CD14-positive monocyte (primary cell): ENCODE measurements at regions of chr10 and their contacts with region 1.

Region 1: GRCh38 chr10:103918053-103918846 is at the start of gene STN1:
- DNase-seq: peak; percentile 94 to 95 (median 94)
- H3K4me3 ChIP-seq: peak within 1 kb of the TSS; percentile 56 to 88 (median 73)
- H3K4me3 Mint-ChIP-seq: peak within 1 kb of the TSS; percentile 92 to 98
- H3K27ac ChIP-seq: peak within 1 kb of the TSS; percentile 79 to 93
- H3K27ac Mint-ChIP-seq: peak within 1 kb of the TSS; percentile 93 to 97 (median 95)
- H3K4me1 ChIP-seq: peaks cover 34 to 47% of the 10 kb centered on the region in 2 donors
- H3K4me1 Mint-ChIP-seq: peaks cover 41% of the 10 kb centered on the region
- H3K27me3 ChIP-seq: no peaks in the 10 kb centered on the region
- H3K27me3 Mint-ChIP-seq: no peaks in the 10 kb centered on the region
- CTCF ChIP-seq: no peak
- polyA plus RNA-seq, gene STN1: 19.3 to 37.4 (median 35.9) TPM

Region 2: DNA sequence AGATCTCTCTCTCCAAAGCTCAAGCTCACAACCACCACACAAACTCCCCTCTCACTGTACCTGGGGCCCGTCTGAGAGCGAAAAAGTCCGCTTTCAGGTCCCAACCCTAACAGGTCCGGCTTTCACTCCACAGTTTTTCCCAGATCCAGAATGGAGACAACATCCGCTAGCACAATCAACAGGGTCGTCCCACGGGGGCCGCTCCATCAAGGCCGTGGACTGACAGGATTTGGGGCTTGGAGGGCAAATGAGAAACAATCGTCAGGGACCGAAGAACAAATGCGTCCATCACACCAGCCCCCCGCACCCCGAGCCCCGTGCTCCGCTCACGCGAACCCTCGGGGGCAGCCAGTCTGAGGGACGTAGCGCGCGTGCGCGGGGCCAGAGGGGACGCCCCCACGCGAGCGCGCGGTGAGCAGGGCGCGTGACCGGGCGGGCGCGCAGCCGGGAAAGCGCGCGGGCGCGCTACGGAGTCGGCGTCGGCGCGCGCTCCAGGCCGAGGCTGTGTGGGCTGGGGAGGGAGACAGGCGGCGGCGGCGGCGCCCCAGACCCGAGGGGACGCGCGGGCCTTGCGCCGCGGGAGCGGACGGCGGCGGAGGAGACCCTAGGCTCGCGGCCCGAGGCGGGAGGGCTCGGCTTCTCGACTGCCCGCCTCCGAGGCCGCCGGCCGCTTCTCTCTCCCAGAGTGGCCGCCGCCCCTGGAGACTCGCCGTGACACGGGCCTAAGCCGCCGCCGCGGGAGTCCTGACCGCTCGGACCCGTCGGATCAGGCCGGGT is 48.6 kb after region 1 on chr10 and contains the start of gene SLK:
- intact Hi-C with region 1: loop called (anchors 5 kb)
- DNase-seq: peak; percentile 77 to 86 (median 80)
- H3K4me3 ChIP-seq: peak within 1 kb of the TSS; percentile 90 to 99 (median 93)
- H3K4me3 Mint-ChIP-seq: peak within 1 kb of the TSS; percentile 98 to 100
- H3K27ac ChIP-seq: peak within 1 kb of the TSS; percentile 42 to 93
- H3K27ac Mint-ChIP-seq: peak within 1 kb of the TSS; percentile 87 to 95 (median 93)
- H3K4me1 ChIP-seq: peaks cover 23 to 43% of the 10 kb centered on the region in 2 donors
- H3K4me1 Mint-ChIP-seq: peaks cover 42% of the 10 kb centered on the region
- H3K27me3 ChIP-seq: no peaks in the 10 kb centered on the region
- H3K27me3 Mint-ChIP-seq: peaks cover 0 to 1% (median 0%) of the 10 kb centered on the region in 3 donors
- CTCF ChIP-seq: no peak
- polyA plus RNA-seq, gene SLK: 2.9 to 6.5 (median 4.4) TPM

Region 3: DNA sequence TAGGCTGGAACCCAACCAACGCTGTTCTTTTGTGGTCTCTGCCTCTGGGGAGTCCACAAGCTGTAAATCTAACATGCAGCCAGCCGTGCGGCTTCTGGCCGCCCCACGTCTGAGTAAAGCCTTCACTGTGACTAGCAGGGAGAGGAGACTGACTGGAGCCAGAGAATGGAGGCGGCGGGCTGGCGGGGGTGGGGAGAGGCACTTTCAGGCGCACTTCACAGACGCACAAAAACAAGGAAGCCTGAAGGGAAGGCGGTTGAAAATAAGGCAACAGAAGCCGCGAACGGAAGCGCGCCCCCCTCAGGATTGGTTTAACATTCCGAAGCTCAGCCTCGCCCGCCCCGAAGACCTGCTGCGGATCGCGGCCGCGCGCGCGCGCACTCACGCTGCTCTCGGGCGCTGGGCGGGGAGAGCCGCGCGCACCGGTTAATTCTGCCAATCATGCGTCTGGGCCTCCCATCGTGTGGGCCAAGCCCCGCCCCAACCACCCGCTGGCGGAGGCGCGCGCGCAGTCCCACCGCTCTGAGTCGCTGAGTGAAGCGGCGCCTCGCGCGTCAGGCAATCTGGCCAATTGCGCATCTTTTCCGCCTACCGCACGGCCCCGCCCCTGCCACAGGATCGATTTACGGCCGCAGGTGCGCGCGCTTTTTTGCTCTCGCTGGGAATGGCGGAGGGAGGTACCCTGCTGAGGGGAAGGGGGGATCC is 203.4 kb after region 1 on chr10 and contains the start of gene SFR1:
- intact Hi-C with region 1: loop called (anchors 5 to 10 kb)
- DNase-seq: peak; percentile 98 to 99 (median 99)
- H3K4me3 ChIP-seq: peak within 1 kb of the TSS; percentile 94 to 97 (median 95)
- H3K4me3 Mint-ChIP-seq: peak within 1 kb of the TSS; percentile 86 to 91
- H3K27ac ChIP-seq: peak within 1 kb of the TSS; percentile 96 to 100
- H3K27ac Mint-ChIP-seq: peak within 1 kb of the TSS; percentile 98 to 100 (median 99)
- H3K4me1 ChIP-seq: peaks cover 12 to 18% of the 10 kb centered on the region in 2 donors
- H3K4me1 Mint-ChIP-seq: peaks cover 14% of the 10 kb centered on the region
- H3K27me3 ChIP-seq: no peaks in the 10 kb centered on the region
- H3K27me3 Mint-ChIP-seq: peaks cover 0 to 5% (median 1%) of the 10 kb centered on the region in 3 donors
- CTCF ChIP-seq: peak; percentile 62
- polyA plus RNA-seq, gene SFR1: 6.4 to 18.1 (median 16.9) TPM

Region 4: DNA sequence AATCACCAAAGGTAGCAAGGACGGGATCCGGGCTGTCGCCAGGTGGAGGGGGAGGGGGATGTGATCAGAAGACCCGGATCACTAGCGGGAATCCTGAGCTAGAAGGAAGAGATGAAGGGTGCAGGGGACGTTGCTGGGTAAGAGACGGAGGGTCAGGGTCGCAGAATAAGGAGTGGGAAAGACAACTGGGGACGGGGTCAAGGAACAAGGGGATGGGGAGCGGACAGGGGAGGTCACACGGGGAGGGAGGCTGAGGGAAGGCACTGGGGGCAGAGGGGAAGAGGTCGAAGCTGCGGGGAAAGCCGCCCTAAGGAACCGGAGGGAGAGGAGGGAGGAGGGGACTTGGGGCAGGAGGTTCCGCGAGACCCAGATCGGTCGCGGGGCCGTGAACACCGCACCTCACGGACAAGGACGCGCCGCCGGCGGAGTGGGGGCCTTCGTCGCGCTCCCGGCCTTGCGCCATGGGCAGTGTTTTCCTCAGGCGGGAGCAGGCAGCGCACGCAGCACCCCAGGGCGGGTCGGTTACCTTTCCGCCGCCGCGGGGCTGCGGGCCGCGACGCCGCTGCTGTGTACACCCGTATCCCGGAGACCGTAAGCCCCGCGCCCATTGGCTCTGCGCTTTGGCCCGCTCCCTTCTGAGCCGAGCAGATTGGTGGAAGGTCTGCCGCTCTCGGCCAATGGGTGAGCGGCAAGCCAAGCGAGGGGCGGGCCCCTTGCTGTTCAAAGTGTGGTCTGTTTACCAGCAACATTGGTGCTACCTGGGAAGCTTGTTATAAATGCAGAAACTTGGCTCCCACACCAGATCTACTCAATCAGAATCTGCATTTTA is 313.7 kb after region 1 on chr10 and contains the start of gene CFAP43:
- intact Hi-C with region 1: loop called in 1 of 2 experiments (anchors 10 kb)
- DNase-seq: peak; percentile 96 to 97 (median 96)
- H3K4me3 ChIP-seq: peak within 1 kb of the TSS; percentile 51 to 77 (median 57)
- H3K4me3 Mint-ChIP-seq: peak within 1 kb of the TSS; percentile 80 to 89
- H3K27ac ChIP-seq: peak within 1 kb of the TSS in 1 of 2 donors; percentile 33
- H3K27ac Mint-ChIP-seq: peak within 1 kb of the TSS in 5 of 7 donors; percentile 78 to 91 (median 88)
- H3K4me1 ChIP-seq: peaks cover 11 to 12% of the 10 kb centered on the region in 2 donors
- H3K4me1 Mint-ChIP-seq: peaks cover 7% of the 10 kb centered on the region
- H3K27me3 ChIP-seq: peaks cover 8 to 19% of the 10 kb centered on the region in 2 donors
- H3K27me3 Mint-ChIP-seq: peaks cover 12 to 23% (median 23%) of the 10 kb centered on the region in 3 donors
- CTCF ChIP-seq: no peak
- polyA plus RNA-seq, gene CFAP43: 0.06 TPM in 1 of 3 donors, not detected in the others

Region 5: DNA sequence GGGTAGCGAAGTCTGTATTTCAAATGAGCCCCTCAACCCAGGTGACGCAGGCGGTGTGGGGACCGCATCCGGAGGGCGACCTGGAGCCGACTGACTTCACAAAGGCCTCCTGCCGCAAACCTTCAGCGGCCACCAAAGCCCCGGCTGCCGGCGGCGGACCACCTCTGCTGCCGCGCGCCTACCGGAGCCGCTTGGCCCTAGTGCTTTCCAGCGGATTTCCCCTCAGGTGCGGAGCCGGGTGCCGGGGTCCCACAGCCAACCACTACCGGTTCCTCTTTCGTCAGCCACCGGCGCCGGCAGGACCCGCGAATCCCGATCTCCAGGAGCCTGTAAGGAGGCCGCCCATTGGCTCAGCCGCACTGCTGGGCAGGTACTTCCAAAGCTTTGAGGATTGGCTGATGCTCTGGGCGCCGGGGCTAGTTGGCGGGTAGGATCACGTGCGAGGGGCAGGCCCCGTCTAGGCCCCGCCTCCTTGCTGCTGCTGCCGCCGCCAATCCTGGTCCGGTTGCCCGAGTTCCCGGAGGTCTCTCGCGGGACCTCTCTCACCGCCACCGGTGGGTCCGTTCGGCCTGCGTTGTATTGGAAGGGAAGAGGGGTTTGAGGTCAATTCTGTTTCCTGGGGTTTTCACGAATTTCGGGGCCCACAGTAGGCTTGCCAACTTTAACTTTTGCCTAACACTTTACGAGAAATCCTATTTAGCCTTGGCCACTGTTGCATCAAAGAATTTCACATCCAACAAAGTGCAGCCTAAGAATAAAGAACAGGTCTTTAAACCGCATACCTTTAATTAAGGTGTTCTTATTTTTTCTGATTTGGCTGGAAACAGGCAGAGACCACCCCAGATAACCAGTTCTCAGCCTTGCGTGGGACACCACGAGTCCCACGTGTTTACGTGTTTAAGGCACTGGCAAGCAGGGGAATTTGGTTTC is 350.7 kb after region 1 on chr10 and contains the start of gene GSTO2:
- intact Hi-C with region 1: loop called in 1 of 2 experiments (anchors 10 kb)
- DNase-seq: peak; percentile 97 to 99 (median 99)
- H3K4me3 ChIP-seq: peak within 1 kb of the TSS; percentile 72 to 84 (median 80)
- H3K4me3 Mint-ChIP-seq: peak within 1 kb of the TSS; percentile 83 to 89
- H3K27ac ChIP-seq: peak within 1 kb of the TSS; percentile 80 to 94
- H3K27ac Mint-ChIP-seq: peak within 1 kb of the TSS; percentile 90 to 97 (median 93)
- H3K4me1 ChIP-seq: peaks cover 14 to 22% of the 10 kb centered on the region in 2 donors
- H3K4me1 Mint-ChIP-seq: peaks cover 23% of the 10 kb centered on the region
- H3K27me3 ChIP-seq: no peaks in the 10 kb centered on the region
- H3K27me3 Mint-ChIP-seq: peaks cover under 1% of the 10 kb centered on the region in 3 donors
- CTCF ChIP-seq: no peak
- polyA plus RNA-seq, gene GSTO2: 0.16 to 0.26 TPM in 2 of 3 donors, not detected in the other

Region 6: GRCh38 chr10:104353325-104354048 is 435.2 kb after region 1 on chr10 and contains the start of gene CFAP58:
- intact Hi-C with region 1: loop called in 1 of 2 experiments (anchors 10 kb)
- DNase-seq: peak; percentile 81 to 88 (median 83)
- H3K4me3 ChIP-seq: peak within 1 kb of the TSS; percentile 18 to 72 (median 36)
- H3K4me3 Mint-ChIP-seq: no peak within 1 kb of the TSS
- H3K27ac ChIP-seq: peak within 1 kb of the TSS; percentile 31 to 52
- H3K27ac Mint-ChIP-seq: no peak within 1 kb of the TSS
- H3K4me1 ChIP-seq: peaks cover 68 to 72% of the 10 kb centered on the region in 2 donors
- H3K4me1 Mint-ChIP-seq: no peaks in the 10 kb centered on the region
- H3K27me3 ChIP-seq: no peaks in the 10 kb centered on the region
- H3K27me3 Mint-ChIP-seq: peaks cover 0 to 1% (median 0%) of the 10 kb centered on the region in 3 donors
- CTCF ChIP-seq: peak; percentile 83
- polyA plus RNA-seq, gene CFAP58: 0.16 TPM in 1 of 3 donors, not detected in the others